G401 (cell line): ENCODE measurements at regions of chr4 and their contacts with region 1.

Region 1: DNA sequence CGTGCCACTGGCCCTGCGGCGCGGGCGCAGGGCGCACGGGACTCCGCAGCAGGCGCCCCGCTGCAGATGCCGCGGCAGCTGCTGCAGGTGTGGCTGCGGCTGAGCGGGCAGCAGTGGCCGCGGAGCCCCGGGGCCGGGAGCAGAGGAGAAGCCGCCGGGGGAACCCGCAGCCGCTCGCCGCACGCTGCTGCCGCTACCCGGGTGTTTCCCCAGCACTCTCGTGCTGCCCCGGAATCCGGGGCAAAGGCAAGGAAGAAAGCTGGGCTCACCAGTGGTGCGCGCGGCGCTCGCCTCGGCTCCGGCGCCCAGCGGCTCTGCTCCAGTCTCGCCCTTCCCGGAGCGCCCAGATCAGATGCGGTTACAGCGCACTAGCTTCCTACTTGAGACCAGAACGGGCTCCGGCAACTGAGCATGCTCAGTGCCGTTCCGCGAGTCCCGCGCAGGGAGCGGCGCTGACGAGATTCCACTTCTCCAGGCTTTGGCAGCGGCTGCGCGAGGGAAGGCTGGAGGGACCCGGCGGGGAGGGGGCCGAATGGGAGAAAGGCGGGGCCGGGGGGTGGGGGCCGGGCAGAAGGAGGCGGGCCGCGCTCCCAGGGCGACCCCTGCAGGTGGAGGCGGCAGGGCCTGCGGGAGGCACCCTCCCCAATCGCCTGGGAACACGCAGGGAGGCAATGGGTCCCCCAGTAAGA is at the start of gene APBB2:
- DNase-seq: peak; percentile 90
- total RNA-seq, gene APBB2: 23.1 and 29.7 TPM in 2 replicates

Region 2: GRCh38 chr4:40933272-40934053 is 280.8 kb before region 1 on chr4:
- in situ Hi-C with region 1: loop called (anchors 25 kb)
- DNase-seq: peak; percentile 7